Common myeloid progenitor, CD34-positive (primary cell): ENCODE measurements at regions of chr17 and their contacts with region 1.

Region 1: DNA sequence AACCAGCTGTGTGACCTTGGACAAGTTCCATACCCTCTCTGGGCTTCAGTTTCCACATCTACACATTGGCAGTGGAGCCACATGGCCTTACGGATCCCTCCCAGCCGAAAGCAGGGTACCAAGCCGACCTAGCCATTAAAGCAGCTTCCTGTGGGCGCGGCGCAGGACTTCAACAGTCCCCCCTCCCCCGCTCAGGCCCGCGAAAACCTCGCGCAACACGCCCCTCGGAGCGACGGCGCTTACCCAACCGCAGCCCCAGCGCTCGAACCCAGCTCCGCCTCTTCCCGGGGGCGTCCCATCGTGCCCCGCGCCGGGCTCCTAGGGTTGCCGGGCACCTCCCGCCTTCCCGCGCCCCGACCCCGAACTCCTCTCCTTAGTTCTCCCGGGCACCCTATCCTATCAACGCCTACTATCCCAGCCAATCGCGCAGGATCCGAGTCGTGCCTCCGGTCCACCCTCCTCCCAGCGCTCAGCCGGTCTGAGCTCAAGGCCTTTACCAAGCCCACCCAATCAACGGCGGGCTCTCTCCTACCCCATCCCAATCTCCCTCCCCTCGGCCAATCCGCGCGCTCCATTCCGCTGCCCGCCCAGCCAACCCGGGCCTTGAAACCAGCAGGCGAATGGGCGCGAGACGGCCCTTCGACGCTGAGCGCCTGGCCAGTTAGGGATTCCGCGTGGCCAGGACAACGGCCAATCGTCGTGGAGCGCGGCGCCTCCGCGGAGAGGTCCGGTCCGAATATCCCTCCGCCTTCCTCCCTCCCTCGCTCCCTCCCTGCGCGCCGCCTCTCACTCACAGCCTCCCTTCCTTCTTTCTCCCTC is at the start of gene KPNB1:
- DNase-seq: peak; percentile 100
- H3K4me3 ChIP-seq: peak within 1 kb of the TSS; percentile 66 to 91 (median 81)
- H3K27ac ChIP-seq: peak within 1 kb of the TSS; percentile 61 to 79
- H3K4me1 ChIP-seq: peaks cover 21 to 44% (median 36%) of the 10 kb centered on the region in 4 experiments
- H3K27me3 ChIP-seq: no peaks in the 10 kb centered on the region

Region 2: DNA sequence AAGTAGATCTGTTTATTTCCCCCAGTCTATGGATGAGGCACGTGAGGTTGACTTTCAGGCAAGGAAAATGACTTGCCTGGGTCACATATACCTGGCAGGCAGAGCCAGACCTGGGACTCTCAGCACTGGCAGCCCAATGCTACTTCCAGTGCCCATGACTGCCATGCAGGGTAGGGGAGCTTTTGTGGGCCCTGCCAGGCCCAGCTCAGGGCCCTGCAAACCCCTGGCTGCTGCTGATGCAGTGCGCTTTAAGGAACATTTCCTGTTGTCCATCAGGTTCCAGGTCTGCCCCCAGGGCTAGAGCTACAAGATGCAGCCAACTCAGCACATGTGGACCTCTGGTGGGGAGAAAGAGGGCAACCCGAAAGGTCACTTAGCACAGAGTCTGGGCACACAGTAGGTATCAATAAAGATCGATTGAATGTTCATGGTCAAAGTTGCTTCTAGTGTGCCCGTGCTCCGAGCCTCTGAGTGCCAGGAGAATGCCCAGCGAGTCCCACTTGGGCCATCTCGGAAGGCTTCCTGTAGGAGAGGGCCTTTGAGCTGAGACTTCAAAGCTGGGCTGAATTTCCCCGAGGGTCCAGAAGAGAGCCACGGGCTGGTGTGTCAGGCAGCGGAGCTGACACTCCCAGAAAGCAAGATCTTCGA is 83.2 kb after region 1 on chr17:
- CTCF ChIA-PET with region 1: no interaction called
- POLR2A ChIA-PET with region 1: no interaction called
- DNase-seq: no peak
- H3K4me3 ChIP-seq: peak overlapping the region in 1 of 7 experiments; percentile 70
- H3K27ac ChIP-seq: no peak overlapping the region
- H3K4me1 ChIP-seq: peaks cover 0 to 27% (median 25%) of the 10 kb centered on the region in 4 experiments
- H3K27me3 ChIP-seq: peaks cover 0 to 24% (median 12%) of the 10 kb centered on the region in 5 experiments

Region 3: GRCh38 chr17:47742319-47743181 is 93.2 kb after region 1 on chr17:
- CTCF ChIA-PET with region 1: interaction called, 10 read pairs
- POLR2A ChIA-PET with region 1: interaction called, 3 read pairs
- DNase-seq: peak; percentile 58 to 68 (median 59)
- H3K4me3 ChIP-seq: no peak overlapping the region
- H3K27ac ChIP-seq: no peak overlapping the region
- H3K4me1 ChIP-seq: peaks cover 6 to 22% (median 16%) of the 10 kb centered on the region in 4 experiments
- H3K27me3 ChIP-seq: peaks cover 0 to 4% (median 0%) of the 10 kb centered on the region in 5 experiments